Heart left ventricle (tissue), 16 donors: ENCODE measurements at regions of chr6 and their contacts with region 1.

Region 1: DNA sequence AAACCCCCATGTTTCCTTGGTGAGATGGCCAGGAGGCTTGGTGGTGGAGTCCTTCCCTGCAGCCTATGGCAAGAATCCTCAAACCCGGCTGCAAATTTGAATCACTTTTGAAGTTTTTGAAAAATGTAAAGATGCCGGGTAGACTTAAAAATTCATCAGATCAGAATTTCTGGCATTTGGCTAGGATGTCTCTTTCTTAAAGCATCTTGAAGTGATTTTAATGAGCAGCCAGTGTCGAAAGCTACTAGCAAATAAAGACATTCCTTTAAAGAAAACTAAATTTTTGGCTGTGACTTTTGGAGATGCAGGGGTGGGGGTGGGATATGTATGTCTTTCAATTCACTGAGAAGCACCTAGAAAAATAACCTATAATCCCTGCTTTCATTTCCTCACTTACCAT is 25.6 kb upstream of the NOX3 start:
- DNase-seq: no peak
- ATAC-seq: no peak
- H3K4me3 ChIP-seq: no peak overlapping the region
- H3K27ac ChIP-seq: no peak overlapping the region
- H3K4me1 ChIP-seq: no peaks in the 10 kb centered on the region
- H3K27me3 ChIP-seq: peaks cover 0 to 3% (median 0%) of the 10 kb centered on the region in 9 donors
- CTCF ChIP-seq: no peak
- POLR2A ChIP-seq: no peak

Region 2: DNA sequence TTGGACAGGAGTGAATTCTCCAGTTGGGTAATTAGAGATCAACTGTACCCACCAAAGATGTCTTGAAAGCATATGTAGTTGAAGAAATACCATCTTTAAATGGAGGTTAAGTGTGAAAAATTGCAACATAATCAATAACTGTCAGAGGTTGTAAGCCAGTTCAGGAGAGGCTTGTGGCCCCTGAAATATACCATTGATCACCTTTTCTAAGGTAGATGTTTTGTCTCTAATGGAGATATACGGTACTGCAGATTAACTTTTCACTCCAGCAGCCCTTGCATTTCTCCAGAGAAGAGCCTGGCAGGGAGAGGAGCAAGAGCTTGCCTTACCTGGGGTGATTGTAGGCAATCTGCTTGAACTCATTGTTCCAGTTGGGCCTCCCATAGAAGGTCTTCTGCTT is 74.4 kb before region 1 on chr6:
- intact Hi-C with region 1: loop called in 1 of 10 experiments (anchors 2 kb)
- DNase-seq: no peak
- ATAC-seq: no peak
- H3K4me3 ChIP-seq: no peak overlapping the region
- H3K27ac ChIP-seq: no peak overlapping the region
- H3K4me1 ChIP-seq: peaks cover 0 to 4% (median 0%) of the 10 kb centered on the region in 12 donors
- H3K27me3 ChIP-seq: no peaks in the 10 kb centered on the region
- CTCF ChIP-seq: peak in 2 of 12 donors; percentile 17 to 26
- POLR2A ChIP-seq: no peak

Region 3: DNA sequence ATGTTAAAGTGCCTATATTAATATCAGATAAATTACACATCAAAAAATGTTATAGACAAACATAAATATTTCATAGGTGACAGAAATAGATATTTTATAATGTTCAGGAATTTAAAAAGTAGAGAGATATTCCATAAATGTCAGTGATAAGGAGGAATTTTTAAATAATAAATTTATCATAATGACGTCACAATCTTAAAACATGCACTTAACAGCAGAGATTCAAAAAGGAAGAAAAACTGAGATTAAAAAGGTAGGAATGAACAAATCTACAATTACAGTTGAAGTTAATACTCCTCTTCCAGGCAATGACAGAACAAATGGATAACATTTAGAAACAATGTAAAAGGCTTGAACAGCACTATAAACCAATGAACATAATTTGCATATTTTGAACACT is 319.8 kb after region 1 on chr6:
- intact Hi-C with region 1: no loop called
- DNase-seq: no peak
- ATAC-seq: no peak
- H3K4me3 ChIP-seq: no peak overlapping the region
- H3K27ac ChIP-seq: no peak overlapping the region
- H3K4me1 ChIP-seq: no peaks in the 10 kb centered on the region
- H3K27me3 ChIP-seq: no peaks in the 10 kb centered on the region
- CTCF ChIP-seq: no peak
- POLR2A ChIP-seq: no peak